ENCODE measurements at regions of chr7 and their contacts with region 1.

Region 1: DNA sequence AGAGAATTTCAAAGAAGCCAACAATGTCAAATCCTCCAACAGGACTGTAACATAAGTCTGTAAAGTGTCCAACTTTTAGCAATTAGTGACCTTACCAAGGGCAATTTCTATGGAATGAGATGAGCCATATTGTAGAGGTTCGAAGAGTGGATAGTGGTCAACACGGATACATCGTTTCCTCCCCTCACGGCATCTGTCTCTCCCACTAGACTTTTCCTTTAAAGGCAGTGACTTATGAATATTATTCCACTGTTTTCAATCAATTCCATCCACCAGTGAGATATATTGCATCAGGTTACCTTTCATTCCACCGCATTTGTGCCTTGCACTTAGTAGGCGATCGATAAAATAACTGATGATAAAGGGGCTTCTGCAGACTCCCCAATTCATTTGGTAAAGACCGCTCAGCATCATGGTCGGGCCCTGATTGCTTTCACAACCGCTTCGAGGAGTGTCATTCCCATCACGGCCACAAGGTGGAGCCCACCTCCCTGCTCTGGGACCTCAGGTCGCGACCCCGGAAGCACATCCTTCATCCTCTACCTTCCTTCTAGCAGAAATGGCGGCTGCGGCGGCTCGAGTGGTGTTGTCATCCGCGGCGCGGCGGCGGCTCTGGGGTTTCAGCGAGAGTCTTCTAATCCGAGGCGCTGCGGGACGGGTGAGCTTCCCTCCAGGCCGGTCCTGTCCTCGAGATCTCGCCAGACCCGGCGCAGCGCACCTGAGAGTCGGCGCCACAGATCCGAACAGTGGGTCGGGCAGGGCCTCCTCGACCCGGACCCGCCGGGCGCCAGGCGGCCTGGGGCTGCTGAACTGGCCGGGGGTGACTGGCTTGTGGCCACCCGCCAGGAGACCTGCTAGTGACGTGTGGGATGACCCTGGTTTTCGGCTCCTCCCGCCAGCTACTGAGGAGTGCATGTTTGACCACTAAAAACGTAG is at the start of gene PMPCB:
- DNase-seq: peak; percentile 89
- ATAC-seq: peak; percentile 99
- H3K4me3 Mint-ChIP-seq: peak within 1 kb of the TSS; percentile 90
- H3K27ac Mint-ChIP-seq: peak within 1 kb of the TSS; percentile 84
- H3K4me1 Mint-ChIP-seq: peaks cover 24% of the 10 kb centered on the region
- H3K27me3 Mint-ChIP-seq: no peaks in the 10 kb centered on the region
- CTCF ChIP-seq: peak; percentile 37
- total RNA-seq, gene PMPCB: 76.9 and 80.8 TPM in 2 replicates

Region 2: GRCh38 chr7:101538596-101539459 is 1758.3 kb before region 1 on chr7:
- CTCF ChIA-PET with region 1: no interaction called
- POLR2A ChIA-PET with region 1: no interaction called
- intact Hi-C with region 1: no loop called
- DNase-seq: peak; percentile 54
- ATAC-seq: peak; percentile 58
- H3K4me3 Mint-ChIP-seq: no peak overlapping the region
- H3K27ac Mint-ChIP-seq: no peak overlapping the region
- H3K4me1 Mint-ChIP-seq: no peaks in the 10 kb centered on the region
- H3K27me3 Mint-ChIP-seq: peaks cover 4% of the 10 kb centered on the region
- CTCF ChIP-seq: no peak

Region 3: GRCh38 chr7:103009466-103010185 is 287.5 kb before region 1 on chr7:
- CTCF ChIA-PET with region 1: no interaction called
- POLR2A ChIA-PET with region 1: no interaction called
- intact Hi-C with region 1: no loop called
- DNase-seq: no peak
- ATAC-seq: peak; percentile 85
- H3K4me3 Mint-ChIP-seq: peak overlapping the region; percentile 53
- H3K27ac Mint-ChIP-seq: peak overlapping the region; percentile 55
- H3K4me1 Mint-ChIP-seq: peaks cover 28% of the 10 kb centered on the region
- H3K27me3 Mint-ChIP-seq: no peaks in the 10 kb centered on the region
- CTCF ChIP-seq: no peak

Region 4: DNA sequence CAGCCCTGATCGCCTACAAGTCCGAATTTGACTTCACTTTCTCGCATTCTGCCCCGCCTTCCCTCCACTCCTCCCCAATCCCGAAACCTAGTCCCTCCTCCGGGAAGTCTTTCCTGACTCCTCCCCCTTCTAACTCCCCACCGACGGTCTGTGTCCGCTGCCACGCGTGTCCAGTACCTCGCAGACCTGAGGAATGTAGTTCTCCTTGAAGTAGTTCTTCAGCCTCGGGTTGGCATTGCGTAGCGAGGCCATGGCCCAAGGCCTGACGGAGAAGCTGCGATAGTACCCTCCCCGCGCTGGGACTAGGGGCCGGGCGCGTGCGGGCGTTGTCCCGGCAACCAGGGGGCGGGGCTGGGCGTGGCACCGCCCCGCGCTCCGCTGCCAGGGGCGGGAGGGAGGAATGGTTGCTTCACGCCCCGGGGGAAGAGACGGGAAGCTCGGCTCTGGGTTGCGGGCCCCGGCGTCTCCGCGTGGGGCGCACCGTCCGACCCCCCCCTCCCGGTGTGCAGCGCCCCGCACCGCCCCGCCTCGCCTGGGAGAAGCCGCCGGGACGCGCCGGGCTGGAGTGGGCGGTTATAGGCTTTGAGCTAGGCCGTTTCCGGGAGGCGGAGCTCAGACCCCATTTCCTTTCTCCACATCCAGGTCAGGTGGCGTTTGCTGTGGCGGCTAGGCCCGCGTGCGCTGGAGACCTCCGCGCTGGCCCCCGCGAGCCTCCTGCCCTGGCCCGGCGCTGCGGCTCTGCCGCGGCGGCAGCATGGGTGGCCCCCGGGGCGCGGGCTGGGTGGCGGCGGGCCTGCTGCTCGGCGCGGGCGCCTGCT is 222.4 kb before region 1 on chr7 and contains the starts of genes ARMC10 and FBXL13:
- CTCF ChIA-PET with region 1: no interaction called
- POLR2A ChIA-PET with region 1: no interaction called
- intact Hi-C with region 1: loop called (anchors 5 kb)
- DNase-seq: peak; percentile 95
- ATAC-seq: peak; percentile 85
- H3K4me3 Mint-ChIP-seq: peak within 1 kb of the TSS; percentile 94
- H3K27ac Mint-ChIP-seq: peak within 1 kb of the TSS; percentile 95
- H3K4me1 Mint-ChIP-seq: peaks cover 41% of the 10 kb centered on the region
- H3K27me3 Mint-ChIP-seq: no peaks in the 10 kb centered on the region
- CTCF ChIP-seq: no peak
- total RNA-seq, gene ARMC10: 24.9 and 26.7 TPM in 2 replicates
- total RNA-seq, gene FBXL13: 2.9 and 3.4 TPM in 2 replicates

Region 5: GRCh38 chr7:103148994-103149807 is 148.0 kb before region 1 on chr7 and contains the start of gene NAPEPLD:
- CTCF ChIA-PET with region 1: no interaction called
- POLR2A ChIA-PET with region 1: no interaction called
- intact Hi-C with region 1: loop called (anchors 1 kb)
- DNase-seq: peak; percentile 81
- ATAC-seq: peak; percentile 86
- H3K4me3 Mint-ChIP-seq: peak within 1 kb of the TSS; percentile 98
- H3K27ac Mint-ChIP-seq: peak within 1 kb of the TSS; percentile 96
- H3K4me1 Mint-ChIP-seq: peaks cover 40% of the 10 kb centered on the region
- H3K27me3 Mint-ChIP-seq: no peaks in the 10 kb centered on the region
- CTCF ChIP-seq: no peak
- total RNA-seq, gene NAPEPLD: 14.4 and 15.4 TPM in 2 replicates

Region 6: DNA sequence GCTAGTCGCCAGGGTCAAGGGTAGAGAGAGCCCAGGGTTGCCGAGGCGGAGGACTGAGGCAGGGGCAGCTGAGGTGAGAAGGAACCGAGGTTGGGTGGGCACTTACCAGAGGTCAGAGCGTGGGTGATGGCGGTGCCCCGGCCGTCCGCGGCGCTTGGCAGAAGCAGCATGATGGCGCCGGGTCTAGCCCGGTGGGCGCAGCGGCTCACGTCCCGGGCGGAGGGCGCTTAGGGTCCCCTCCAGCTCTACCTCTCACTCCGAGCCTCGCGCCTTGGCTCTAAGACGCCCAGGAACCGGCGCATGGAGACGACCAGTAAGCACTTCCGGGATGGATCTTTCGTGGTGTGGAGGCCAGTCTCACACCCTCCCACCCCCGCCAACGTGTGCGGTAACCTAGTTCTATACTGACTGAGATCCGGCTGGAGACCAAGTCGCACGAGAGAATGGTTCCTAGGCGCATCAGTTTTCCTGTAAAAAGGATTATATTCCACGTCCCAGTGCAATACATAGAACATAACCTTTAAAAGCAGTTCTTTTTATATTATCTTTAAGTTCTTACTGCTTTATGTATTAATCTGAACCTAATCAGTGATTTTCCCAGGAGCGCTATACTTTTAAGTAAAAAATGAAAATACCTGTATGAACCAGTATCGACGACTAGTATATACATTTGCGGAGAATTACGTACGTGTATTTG is 47.4 kb after region 1 on chr7 and contains the start of gene DNAJC2:
- CTCF ChIA-PET with region 1: no interaction called
- POLR2A ChIA-PET with region 1: interaction called, 6 read pairs
- intact Hi-C with region 1: loop called (anchors 1 kb)
- DNase-seq: peak; percentile 65
- ATAC-seq: peak; percentile 90
- H3K4me3 Mint-ChIP-seq: peak within 1 kb of the TSS; percentile 99
- H3K27ac Mint-ChIP-seq: peak within 1 kb of the TSS; percentile 94
- H3K4me1 Mint-ChIP-seq: peaks cover 60% of the 10 kb centered on the region
- H3K27me3 Mint-ChIP-seq: no peaks in the 10 kb centered on the region
- CTCF ChIP-seq: no peak
- total RNA-seq, gene DNAJC2: 45.8 and 49.0 TPM in 2 replicates

Region 7: DNA sequence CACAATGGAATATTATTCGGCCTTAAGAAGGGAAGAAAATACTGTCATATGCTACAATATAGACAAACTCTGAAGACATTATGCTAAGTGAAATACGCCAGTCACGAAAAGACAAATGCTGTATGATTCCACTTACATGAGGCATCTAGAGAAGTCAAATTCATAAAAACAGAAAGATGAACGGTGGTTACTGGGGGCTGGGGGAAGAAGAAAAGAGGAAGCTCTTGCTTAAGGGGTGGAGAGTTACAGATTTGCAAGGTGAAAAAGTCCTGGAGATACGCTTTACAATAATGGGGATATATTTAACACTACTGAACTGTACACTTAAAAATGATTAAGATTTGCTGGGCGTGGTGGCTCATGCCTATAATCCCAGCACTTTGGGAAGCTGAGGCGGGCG is 99.3 kb after region 1 on chr7:
- CTCF ChIA-PET with region 1: no interaction called
- POLR2A ChIA-PET with region 1: no interaction called
- intact Hi-C with region 1: no loop called
- DNase-seq: no peak
- ATAC-seq: no peak
- H3K4me3 Mint-ChIP-seq: no peak overlapping the region
- H3K27ac Mint-ChIP-seq: no peak overlapping the region
- H3K4me1 Mint-ChIP-seq: no peaks in the 10 kb centered on the region
- H3K27me3 Mint-ChIP-seq: peaks cover 2% of the 10 kb centered on the region
- CTCF ChIP-seq: no peak

Region 8: DNA sequence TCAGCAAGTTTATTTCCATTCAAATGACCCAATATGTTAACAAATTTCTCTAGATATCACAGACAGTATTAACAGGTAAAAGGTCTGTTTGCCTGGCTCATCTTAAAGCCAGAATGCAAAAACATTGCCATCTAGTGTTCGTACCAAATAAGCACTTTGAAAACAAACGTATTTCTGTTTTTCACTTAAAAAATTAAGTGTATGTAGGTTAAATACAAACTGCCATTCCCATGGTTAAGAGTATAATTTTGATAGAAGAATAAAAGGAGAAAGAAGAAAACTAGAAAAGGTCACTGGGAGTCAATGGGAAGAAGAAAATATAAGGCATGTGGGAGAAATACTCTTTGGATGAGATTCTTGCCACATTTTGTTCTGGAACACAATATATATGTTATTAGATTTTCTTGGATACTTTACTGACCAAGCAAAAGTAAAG is 859.7 kb after region 1 on chr7:
- CTCF ChIA-PET with region 1: no interaction called
- POLR2A ChIA-PET with region 1: no interaction called
- intact Hi-C with region 1: loop called (anchors 5 kb)
- DNase-seq: no peak
- ATAC-seq: no peak
- H3K4me3 Mint-ChIP-seq: no peak overlapping the region
- H3K27ac Mint-ChIP-seq: no peak overlapping the region
- H3K4me1 Mint-ChIP-seq: no peaks in the 10 kb centered on the region
- H3K27me3 Mint-ChIP-seq: no peaks in the 10 kb centered on the region
- CTCF ChIP-seq: no peak

Region 9: GRCh38 chr7:104207731-104208420 is 910.7 kb after region 1 on chr7 and contains the start of gene ORC5:
- CTCF ChIA-PET with region 1: no interaction called
- POLR2A ChIA-PET with region 1: no interaction called
- intact Hi-C with region 1: loop called (anchors 5 kb)
- DNase-seq: peak; percentile 69
- ATAC-seq: peak; percentile 99
- H3K4me3 Mint-ChIP-seq: peak within 1 kb of the TSS; percentile 95
- H3K27ac Mint-ChIP-seq: peak within 1 kb of the TSS; percentile 90
- H3K4me1 Mint-ChIP-seq: peaks cover 29% of the 10 kb centered on the region
- H3K27me3 Mint-ChIP-seq: peaks cover 14% of the 10 kb centered on the region
- CTCF ChIP-seq: no peak
- total RNA-seq, gene ORC5: 22.1 and 23.0 TPM in 2 replicates